Heart right ventricle (tissue), 16 donors: ENCODE measurements at regions of chr21 and their contacts with region 1.

Region 1: DNA sequence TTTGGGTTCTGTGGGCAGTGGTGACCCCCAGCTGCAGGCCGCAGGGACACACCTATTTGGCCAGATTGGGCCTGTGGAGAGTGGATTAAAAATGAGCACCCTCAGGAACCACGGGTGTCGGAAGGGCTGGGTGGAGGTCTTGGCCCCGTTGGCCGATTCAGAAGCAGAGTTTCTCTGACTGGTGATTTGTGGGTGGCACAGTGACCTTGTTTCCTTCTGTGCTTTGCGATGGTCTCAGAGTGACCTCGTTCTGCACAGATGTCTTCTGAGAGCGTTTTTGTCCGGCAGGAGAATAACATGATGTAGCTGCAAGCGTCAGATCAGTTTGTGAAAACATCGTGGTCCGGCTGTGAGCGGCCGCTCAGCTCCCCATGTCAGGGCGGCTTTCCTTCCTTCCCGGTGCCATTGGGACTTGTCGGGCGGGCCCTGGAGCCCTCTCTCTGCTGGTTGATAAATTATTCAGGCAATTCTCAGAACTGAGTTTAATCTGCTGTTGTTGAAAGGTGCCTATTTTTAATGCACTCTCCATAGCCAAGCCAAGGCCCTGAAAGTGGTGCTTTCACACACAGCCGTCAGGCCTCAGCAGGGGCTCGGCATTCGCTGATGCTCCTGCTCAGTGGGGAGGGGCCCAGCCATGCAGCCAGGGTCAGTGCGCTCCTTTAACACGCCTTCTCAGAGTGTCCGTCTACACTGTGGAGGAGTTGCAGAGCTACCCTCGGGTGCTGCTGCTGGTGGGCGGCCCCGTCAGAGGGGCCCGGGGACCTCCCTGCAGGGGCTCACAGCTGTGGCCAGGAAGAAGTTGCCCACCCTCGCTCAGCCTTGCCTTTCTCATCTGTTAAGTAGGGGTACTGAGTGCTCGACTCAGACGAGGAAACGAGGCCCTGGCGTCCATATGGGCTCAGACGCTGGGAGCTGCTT is 26.8 kb downstream of the TRPM2 start:
- DNase-seq: no peak
- ATAC-seq: no peak
- H3K4me3 ChIP-seq: no peak overlapping the region
- H3K27ac ChIP-seq: no peak overlapping the region
- H3K4me1 ChIP-seq: peaks cover 0 to 8% (median 0%) of the 10 kb centered on the region in 9 donors
- H3K27me3 ChIP-seq: peaks cover 0 to 60% (median 16%) of the 10 kb centered on the region in 7 donors
- CTCF ChIP-seq: no peak

Region 2: DNA sequence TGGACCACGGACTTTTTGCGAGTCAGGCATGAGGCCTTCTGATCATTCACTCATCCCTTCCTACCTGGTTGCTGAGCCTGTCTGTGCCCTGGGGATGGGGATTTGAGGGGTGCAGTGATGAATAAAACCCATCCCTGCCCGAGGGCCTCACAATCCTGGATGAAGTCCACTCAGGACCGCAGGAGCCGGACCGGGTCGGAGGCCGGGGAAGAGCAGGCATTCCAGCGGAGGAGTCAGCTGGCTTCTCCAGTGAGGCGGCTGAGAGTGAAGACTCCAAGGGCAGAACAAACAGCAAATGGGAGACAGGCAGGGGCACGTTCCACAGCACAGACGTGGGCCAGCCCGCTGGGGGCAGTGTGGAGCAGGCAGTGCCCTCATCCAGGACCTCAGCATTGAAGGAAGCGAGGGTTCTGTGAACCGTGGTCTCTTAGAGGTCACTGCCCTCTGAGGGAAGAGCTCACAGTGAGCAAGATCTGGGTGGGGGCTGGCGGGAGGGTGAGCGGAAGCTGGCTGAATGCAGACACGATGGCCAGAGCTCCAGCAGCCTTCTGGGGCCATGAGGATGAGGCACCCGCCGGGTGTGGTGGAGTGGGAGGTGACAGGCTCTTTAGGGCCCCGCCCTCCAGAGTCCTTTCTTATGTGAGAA is 64.2 kb after region 1 on chr21:
- intact Hi-C with region 1: loop called in 1 of 10 experiments (anchors 10 kb)
- DNase-seq: peak in 1 of 2 donors; percentile 6
- ATAC-seq: no peak
- H3K4me3 ChIP-seq: no peak overlapping the region
- H3K27ac ChIP-seq: no peak overlapping the region
- H3K4me1 ChIP-seq: peaks cover 0 to 3% (median 0%) of the 10 kb centered on the region in 9 donors
- H3K27me3 ChIP-seq: peaks cover 0 to 24% (median 7%) of the 10 kb centered on the region in 7 donors
- CTCF ChIP-seq: no peak